Activated CD8-positive, alpha-beta T cell treated with anti-CD3 and anti-CD28 coated beads, Interleukin-2, amount 10 ng/mL, durations not matched to agents 7 days and 5 days (primary cell): ENCODE measurements at regions of chr17 and their contacts with region 1.

Region 1: DNA sequence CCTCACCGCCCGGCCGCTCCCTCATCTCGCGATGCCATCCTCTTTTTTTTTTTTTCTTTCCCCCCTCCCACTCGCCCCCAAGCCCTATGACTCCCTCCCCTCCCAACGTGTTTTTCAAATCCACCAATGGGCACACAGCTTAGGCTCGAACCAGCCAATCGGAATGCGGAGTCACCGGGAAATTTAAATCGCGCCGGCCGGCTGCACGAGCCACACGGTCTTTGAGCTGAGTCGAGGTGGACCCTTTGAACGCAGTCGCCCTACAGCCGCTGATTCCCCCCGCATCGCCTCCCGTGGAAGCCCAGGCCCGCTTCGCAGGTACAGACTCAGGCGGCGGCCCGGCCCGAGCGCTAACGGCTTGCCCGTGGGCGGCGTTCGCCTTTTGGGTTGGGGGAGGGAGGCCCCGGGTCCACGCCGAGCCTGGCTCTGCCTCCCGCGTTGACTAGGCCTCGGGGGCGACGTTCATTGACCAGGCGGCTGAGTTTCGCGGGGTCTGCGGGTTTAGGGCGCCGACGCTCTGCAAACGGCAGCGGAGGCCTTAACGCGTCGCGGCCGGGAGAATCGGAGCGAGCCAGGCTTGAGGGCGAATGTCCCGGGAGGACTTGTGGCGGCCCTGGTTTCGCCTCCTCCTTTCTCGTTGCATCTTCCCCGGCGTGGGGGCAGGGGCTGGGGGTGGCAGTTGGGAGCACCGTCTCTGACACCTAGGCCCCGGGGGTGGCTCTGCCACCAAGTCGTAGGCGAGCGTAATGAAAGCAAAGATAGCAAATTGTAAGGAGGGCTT is at the start of gene KPNA2:
- DNase-seq: peak; percentile 96
- ATAC-seq: peak; percentile 94
- H3K4me3 Mint-ChIP-seq: peak within 1 kb of the TSS; percentile 99
- H3K27ac Mint-ChIP-seq: peak within 1 kb of the TSS; percentile 98
- H3K4me1 Mint-ChIP-seq: peaks cover 23% of the 10 kb centered on the region
- H3K27me3 Mint-ChIP-seq: no peaks in the 10 kb centered on the region
- total RNA-seq, gene KPNA2: 288 to 292 TPM

Region 2: DNA sequence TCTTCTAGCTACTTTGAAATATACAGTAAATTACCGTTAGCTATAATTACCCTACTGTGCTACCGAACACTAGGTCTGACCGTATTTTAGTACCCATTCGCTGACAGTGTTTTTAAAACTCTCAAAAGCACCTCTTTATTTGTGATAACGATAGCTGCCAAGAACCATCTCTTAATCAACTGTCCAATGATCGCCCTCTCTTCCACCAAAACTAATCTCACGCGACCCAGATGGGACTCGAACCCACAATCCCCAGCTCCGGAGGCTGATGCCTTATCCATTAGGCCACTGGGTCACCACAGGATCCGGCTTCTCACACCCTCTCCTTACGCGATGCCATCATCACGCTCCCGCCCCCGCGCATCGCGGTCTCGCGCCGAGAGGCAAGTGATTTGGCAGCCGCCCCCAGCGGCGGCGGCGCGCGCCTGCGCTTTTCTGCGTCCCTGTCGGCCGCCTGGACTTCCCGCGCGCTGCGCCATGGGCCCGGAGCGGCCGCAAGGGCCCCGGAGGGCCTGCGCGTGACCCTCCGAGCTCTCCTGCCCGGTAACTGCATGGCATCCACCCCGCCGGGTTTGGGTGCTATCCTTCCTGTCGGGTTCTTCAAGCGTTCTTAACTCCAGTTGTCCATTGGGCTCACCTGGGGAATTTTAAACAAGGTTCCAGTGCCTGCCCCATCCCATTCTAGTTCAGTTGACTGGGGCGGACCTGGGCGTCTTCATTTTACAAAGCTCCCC is 15.9 kb before region 1 on chr17:
- CTCF ChIA-PET with region 1: interaction called, 7 read pairs
- POLR2A ChIA-PET with region 1: interaction called, 20 read pairs
- DNase-seq: peak; percentile 97
- ATAC-seq: peak; percentile 95
- H3K4me3 Mint-ChIP-seq: peak overlapping the region; percentile 85
- H3K27ac Mint-ChIP-seq: peak overlapping the region; percentile 91
- H3K4me1 Mint-ChIP-seq: peaks cover 20% of the 10 kb centered on the region
- H3K27me3 Mint-ChIP-seq: peaks cover 8% of the 10 kb centered on the region

Region 3: GRCh38 chr17:68061504-68062313 is 26.0 kb after region 1 on chr17:
- CTCF ChIA-PET with region 1: no interaction called
- POLR2A ChIA-PET with region 1: no interaction called
- DNase-seq: no peak
- ATAC-seq: no peak
- H3K4me3 Mint-ChIP-seq: no peak overlapping the region
- H3K27ac Mint-ChIP-seq: no peak overlapping the region
- H3K4me1 Mint-ChIP-seq: peaks cover 9% of the 10 kb centered on the region
- H3K27me3 Mint-ChIP-seq: peaks cover 5% of the 10 kb centered on the region